ENCODE measurements at regions of chr10 and their contacts with region 1.

Region 1: GRCh38 chr10:63866075-63866746 is 345.0 kb downstream of the REEP3 start:
- DNase-seq: peak in 1 of 2 experiments; percentile 47
- H3K4me3 ChIP-seq: no peak overlapping the region
- H3K27ac ChIP-seq: no peak overlapping the region
- H3K4me1 ChIP-seq: no peaks in the 10 kb centered on the region
- H3K27me3 ChIP-seq: peaks cover 4% of the 10 kb centered on the region; the same call in 1 of the 2 replicates
- CTCF ChIP-seq: peak; percentile 91

Region 2: DNA sequence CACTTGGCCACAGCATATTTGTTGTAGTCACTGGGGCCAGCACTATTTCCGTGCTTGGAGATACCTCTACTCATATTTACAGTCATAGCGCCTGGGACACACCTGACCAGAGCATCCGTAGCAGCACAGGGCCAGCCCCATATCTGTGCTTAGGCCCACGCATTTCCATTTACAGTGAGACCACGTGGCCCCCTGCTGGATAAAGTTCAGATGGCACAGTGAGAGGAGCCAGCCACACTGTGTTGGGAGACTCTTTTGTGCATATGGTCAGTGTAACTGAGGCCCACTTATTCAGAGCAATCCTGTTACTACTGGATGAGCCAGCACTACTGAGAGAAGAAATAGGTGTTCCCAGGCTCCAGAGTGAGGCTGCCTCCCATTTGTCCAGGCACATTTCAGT is 110.3 kb after region 1 on chr10:
- CTCF ChIA-PET with region 1: interaction called, 4 read pairs
- POLR2A ChIA-PET with region 1: no interaction called
- intact Hi-C with region 1: loop called (anchors 2 kb)
- DNase-seq: peak in 1 of 2 experiments; percentile 21
- H3K4me3 ChIP-seq: no peak overlapping the region
- H3K27ac ChIP-seq: no peak overlapping the region
- H3K4me1 ChIP-seq: no peaks in the 10 kb centered on the region
- H3K27me3 ChIP-seq: no peaks in the 10 kb centered on the region
- CTCF ChIP-seq: peak; percentile 51; the same call in 1 of the 2 replicates

Measured in PC-9 (cell line).